Transverse colon (tissue), 4 donors: ENCODE measurements at regions of chr9 and their contacts with region 1.

Region 1: GRCh38 chr9:77883846-77884394 is 147.7 kb downstream of the GNAQ start:
- DNase-seq: no peak
- H3K4me3 ChIP-seq: no peak overlapping the region
- H3K27ac ChIP-seq: peak overlapping the region in 3 of 4 donors; percentile 6 to 30 (median 9)
- H3K4me1 ChIP-seq: peaks cover 6 to 71% (median 48%) of the 10 kb centered on the region in 4 donors
- H3K27me3 ChIP-seq: no peaks in the 10 kb centered on the region
- CTCF ChIP-seq: no peak
- EP300 ChIP-seq: no peak
- POLR2A ChIP-seq: no peak

Region 2: GRCh38 chr9:77864211-77864889 is 19.6 kb before region 1 on chr9:
- in situ Hi-C with region 1: no loop called
- intact Hi-C with region 1: loop called (anchors 2 kb)
- DNase-seq: no peak
- H3K4me3 ChIP-seq: no peak overlapping the region
- H3K27ac ChIP-seq: peak overlapping the region in 3 of 4 donors; percentile 39 to 69 (median 62)
- H3K4me1 ChIP-seq: peaks cover 4 to 23% (median 15%) of the 10 kb centered on the region in 4 donors
- H3K27me3 ChIP-seq: no peaks in the 10 kb centered on the region
- CTCF ChIP-seq: no peak
- EP300 ChIP-seq: no peak
- POLR2A ChIP-seq: no peak

Region 3: DNA sequence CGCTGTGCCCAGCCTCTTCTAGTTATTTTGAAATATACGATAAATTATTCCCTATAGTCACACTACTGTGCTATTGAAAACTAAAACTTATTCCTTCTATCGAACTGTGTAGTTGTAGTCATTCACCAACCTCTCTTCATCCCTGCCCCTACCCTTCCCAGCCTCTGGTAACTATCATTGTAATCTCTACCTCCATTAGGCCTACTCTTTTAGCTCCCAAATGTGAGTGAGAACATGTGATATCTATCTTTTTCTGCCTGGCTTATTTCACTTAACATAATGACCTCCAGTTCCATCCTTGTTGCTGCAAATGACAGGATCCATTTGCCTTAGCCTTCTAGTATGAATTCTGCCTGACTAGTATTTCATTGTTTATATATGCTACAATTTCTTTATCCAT is 540.4 kb after region 1 on chr9:
- in situ Hi-C with region 1: no loop called
- intact Hi-C with region 1: no loop called
- DNase-seq: no peak
- H3K4me3 ChIP-seq: no peak overlapping the region
- H3K27ac ChIP-seq: no peak overlapping the region
- H3K4me1 ChIP-seq: no peaks in the 10 kb centered on the region
- H3K27me3 ChIP-seq: no peaks in the 10 kb centered on the region
- CTCF ChIP-seq: no peak
- EP300 ChIP-seq: no peak
- POLR2A ChIP-seq: no peak